ENCODE measurements at regions of chr14 and their contacts with region 1.

Region 1: GRCh38 chr14:24080888-24081738 is 9.8 kb downstream of the CPNE6 start:
- DNase-seq: peak; percentile 86
- ATAC-seq: peak; percentile 93
- H3K4me3 Mint-ChIP-seq: peak overlapping the region; percentile 80
- H3K27ac Mint-ChIP-seq: peak overlapping the region; percentile 87
- H3K4me1 Mint-ChIP-seq: peaks cover 21% of the 10 kb centered on the region
- H3K27me3 Mint-ChIP-seq: no peaks in the 10 kb centered on the region

Region 2: GRCh38 chr14:24051789-24052655 is 29.1 kb before region 1 on chr14 and contains the start of gene CARMIL3:
- POLR2A ChIA-PET with region 1: interaction called, 21 read pairs
- DNase-seq: peak; percentile 77
- ATAC-seq: peak; percentile 84
- H3K4me3 Mint-ChIP-seq: peak within 1 kb of the TSS; percentile 69
- H3K27ac Mint-ChIP-seq: no peak within 1 kb of the TSS
- H3K4me1 Mint-ChIP-seq: peaks cover 11% of the 10 kb centered on the region
- H3K27me3 Mint-ChIP-seq: peaks cover 40% of the 10 kb centered on the region
- total RNA-seq, gene CARMIL3: 0.80 to 0.91 TPM

Region 3: GRCh38 chr14:24058260-24058950 is 22.7 kb before region 1 on chr14:
- POLR2A ChIA-PET with region 1: interaction called, 21 read pairs
- DNase-seq: no peak
- ATAC-seq: peak; percentile 63
- H3K4me3 Mint-ChIP-seq: no peak overlapping the region
- H3K27ac Mint-ChIP-seq: peak overlapping the region; percentile 78
- H3K4me1 Mint-ChIP-seq: peaks cover 2% of the 10 kb centered on the region
- H3K27me3 Mint-ChIP-seq: peaks cover 2% of the 10 kb centered on the region

Region 4: DNA sequence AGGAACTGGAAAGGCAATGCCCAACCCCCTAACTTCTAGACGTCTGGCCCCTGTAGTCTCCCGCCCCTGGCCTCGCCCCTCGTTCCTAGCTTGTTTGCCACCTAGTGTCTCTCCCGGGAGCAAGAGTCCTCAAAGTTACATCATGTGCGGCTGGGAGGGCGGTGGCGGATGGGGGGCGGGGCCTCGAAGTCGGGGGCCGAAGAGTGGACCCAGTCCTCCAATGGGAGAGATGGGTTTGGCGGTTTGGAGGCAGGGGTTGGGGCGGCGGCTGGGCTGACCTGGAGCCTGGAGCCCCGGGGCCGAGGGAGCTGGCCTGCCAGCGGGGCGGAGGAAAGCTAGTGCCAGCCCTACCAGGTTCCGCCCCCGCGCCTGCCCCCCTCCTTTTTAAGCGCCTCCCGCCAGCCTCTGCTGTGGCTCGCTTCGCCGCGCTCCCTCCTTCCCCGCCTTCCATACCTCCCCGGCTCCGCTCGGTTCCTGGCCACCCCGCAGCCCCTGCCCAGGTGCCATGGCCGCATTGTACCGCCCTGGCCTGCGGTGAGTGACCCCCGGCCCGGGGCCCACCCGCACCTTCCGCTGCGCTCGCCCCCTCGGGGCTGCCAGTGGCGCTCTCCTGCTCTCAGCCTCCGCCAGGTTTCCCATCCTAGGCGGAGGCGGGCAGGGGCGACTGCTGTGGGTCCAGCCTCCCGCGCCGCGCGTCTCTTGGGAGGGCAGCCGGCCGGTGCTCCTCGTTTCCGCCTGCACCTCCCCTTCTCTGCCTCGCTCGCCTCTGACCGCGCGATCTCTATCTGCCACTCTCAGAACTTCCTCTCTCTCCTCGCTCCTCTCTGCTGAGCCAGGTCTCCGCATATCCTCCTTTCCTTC is 13.0 kb after region 1 on chr14 and contains the start of gene PCK2:
- POLR2A ChIA-PET with region 1: interaction called, 71 read pairs
- DNase-seq: peak; percentile 83
- ATAC-seq: peak; percentile 77
- H3K4me3 Mint-ChIP-seq: peak within 1 kb of the TSS; percentile 95
- H3K27ac Mint-ChIP-seq: peak within 1 kb of the TSS; percentile 97
- H3K4me1 Mint-ChIP-seq: peaks cover 29% of the 10 kb centered on the region
- H3K27me3 Mint-ChIP-seq: no peaks in the 10 kb centered on the region
- total RNA-seq, gene PCK2: 47.4 to 50.6 TPM

Region 5: GRCh38 chr14:24135834-24136542 is 54.9 kb after region 1 on chr14 and contains the start of gene PSME1:
- POLR2A ChIA-PET with region 1: interaction called, 13 read pairs
- DNase-seq: peak; percentile 97
- ATAC-seq: peak; percentile 87
- H3K4me3 Mint-ChIP-seq: peak within 1 kb of the TSS; percentile 96
- H3K27ac Mint-ChIP-seq: peak within 1 kb of the TSS; percentile 94
- H3K4me1 Mint-ChIP-seq: peaks cover 51% of the 10 kb centered on the region
- H3K27me3 Mint-ChIP-seq: no peaks in the 10 kb centered on the region
- total RNA-seq, gene PSME1: 430 to 443 TPM

Region 6: GRCh38 chr14:24146978-24147760 is 66.1 kb after region 1 on chr14 and contains the start of gene RNF31:
- POLR2A ChIA-PET with region 1: interaction called, 12 read pairs
- DNase-seq: peak; percentile 95
- ATAC-seq: peak; percentile 82
- H3K4me3 Mint-ChIP-seq: peak within 1 kb of the TSS; percentile 94
- H3K27ac Mint-ChIP-seq: peak within 1 kb of the TSS; percentile 96
- H3K4me1 Mint-ChIP-seq: peaks cover 54% of the 10 kb centered on the region
- H3K27me3 Mint-ChIP-seq: no peaks in the 10 kb centered on the region
- total RNA-seq, gene RNF31: 131 to 153 TPM

Region 7: GRCh38 chr14:24251880-24252288 is 170.8 kb after region 1 on chr14:
- POLR2A ChIA-PET with region 1: no interaction called
- DNase-seq: no peak
- ATAC-seq: no peak
- H3K4me3 Mint-ChIP-seq: no peak overlapping the region
- H3K27ac Mint-ChIP-seq: no peak overlapping the region
- H3K4me1 Mint-ChIP-seq: peaks cover 37% of the 10 kb centered on the region
- H3K27me3 Mint-ChIP-seq: no peaks in the 10 kb centered on the region